ENCODE measurements at regions of chr1 and their contacts with region 1.

Region 1: GRCh38 chr1:155063550-155064110 is at the start of gene EFNA4:
- DNase-seq: peak; percentile 93
- H3K4me3 ChIP-seq: peak within 1 kb of the TSS; percentile 84
- H3K27ac ChIP-seq: peak within 1 kb of the TSS; percentile 55
- H3K4me1 ChIP-seq: peaks cover 32% of the 10 kb centered on the region
- CTCF ChIP-seq: no peak
- total RNA-seq, gene EFNA4: 10.5 and 11.5 TPM in 2 replicates

Region 2: DNA sequence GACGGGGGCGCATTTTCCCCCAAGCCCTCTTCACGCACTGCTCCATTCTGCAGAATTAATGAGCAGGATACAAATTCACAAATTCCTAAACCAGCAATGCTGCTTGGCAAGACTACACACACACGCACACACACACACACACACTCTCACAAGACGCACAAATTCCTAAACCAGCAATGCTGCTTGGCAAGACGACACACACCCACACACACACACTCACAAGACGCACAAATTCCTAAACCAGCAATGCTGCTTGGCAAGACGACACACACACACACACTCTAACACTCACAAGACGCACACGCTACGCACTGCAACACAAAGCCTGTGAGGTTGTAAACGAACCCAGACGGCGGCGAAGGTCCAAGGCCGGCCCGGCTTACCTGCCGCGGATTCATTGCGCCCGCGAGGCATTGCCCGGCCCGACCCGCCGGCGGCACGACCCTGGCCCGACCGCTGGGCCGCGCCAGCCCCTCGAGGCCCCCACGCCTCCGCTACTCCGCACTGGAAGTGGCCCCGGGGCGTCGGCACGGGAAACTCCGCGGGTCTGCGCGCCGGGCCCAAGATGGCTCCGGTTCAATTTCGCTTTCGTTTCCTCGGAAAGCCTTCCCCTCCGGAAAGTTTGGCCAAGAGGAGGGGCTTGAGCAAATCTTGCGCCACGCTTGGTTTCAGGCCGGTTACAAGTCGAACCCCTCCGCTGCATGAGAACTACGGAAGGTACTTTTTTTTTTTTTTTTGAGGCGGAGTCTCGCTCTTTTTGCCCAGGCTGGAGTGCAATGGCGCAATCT is 455.8 kb before region 1 on chr1 and contains the start of gene ADAR:
- CTCF ChIA-PET with region 1: no interaction called
- POLR2A ChIA-PET with region 1: no interaction called
- intact Hi-C with region 1: loop called (anchors 5 kb)
- DNase-seq: peak; percentile 96
- H3K4me3 ChIP-seq: peak within 1 kb of the TSS; percentile 81
- H3K27ac ChIP-seq: peak within 1 kb of the TSS; percentile 81
- H3K4me1 ChIP-seq: peaks cover 43% of the 10 kb centered on the region
- CTCF ChIP-seq: peak; percentile 42; the same call in 1 of the 2 replicates
- total RNA-seq, gene ADAR: 87.8 and 90.2 TPM in 2 replicates

Region 3: GRCh38 chr1:154863315-154864174 is 200.1 kb before region 1 on chr1:
- CTCF ChIA-PET with region 1: no interaction called
- POLR2A ChIA-PET with region 1: no interaction called
- intact Hi-C with region 1: loop called (anchors 5 kb)
- DNase-seq: peak; percentile 83
- H3K4me3 ChIP-seq: peak overlapping the region; percentile 59
- H3K27ac ChIP-seq: peak overlapping the region; percentile 91
- H3K4me1 ChIP-seq: peaks cover 98% of the 10 kb centered on the region
- CTCF ChIP-seq: peak; percentile 93

Region 4: DNA sequence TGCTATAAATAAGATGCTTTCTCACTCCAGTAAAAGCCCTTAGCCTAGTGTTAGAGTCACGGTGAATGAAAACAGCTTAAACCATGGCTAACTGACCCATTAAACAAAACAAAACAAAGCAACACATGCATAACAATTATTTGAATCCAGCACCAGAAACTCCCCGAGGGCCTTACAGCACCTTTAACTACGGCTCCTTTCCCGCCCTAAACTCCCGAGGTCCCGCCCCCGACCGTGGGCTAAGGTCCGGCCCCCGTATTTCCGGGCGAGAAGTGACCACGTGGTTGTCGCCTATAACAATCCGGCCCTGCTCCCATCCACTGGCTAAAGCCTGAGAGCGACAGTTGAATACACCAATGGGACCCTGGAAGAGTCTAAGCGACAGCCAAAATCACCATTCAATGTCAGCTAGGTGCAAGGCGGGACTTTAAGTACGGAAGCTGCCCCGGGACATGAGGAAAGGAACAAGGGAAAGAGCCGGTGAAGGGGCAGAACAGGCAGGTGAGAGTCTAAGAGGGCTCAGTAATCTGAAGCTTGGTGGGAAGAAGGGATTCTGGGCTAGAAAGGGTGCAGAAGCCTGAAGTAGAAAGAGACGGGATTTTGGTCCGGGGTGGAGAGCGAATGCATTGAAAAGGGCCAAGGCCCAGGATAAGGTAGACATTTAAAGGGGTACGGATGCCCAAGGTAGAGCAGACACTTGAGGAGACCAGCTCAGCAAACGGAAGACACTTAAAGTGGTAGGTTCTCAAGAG is 80.6 kb before region 1 on chr1 and contains the start of gene FLAD1:
- CTCF ChIA-PET with region 1: interaction called, 4 read pairs
- POLR2A ChIA-PET with region 1: interaction called, 3 read pairs
- intact Hi-C with region 1: loop called (anchors 5 kb)
- DNase-seq: peak; percentile 100
- H3K4me3 ChIP-seq: peak within 1 kb of the TSS; percentile 77
- H3K27ac ChIP-seq: peak within 1 kb of the TSS; percentile 80
- H3K4me1 ChIP-seq: peaks cover 21% of the 10 kb centered on the region
- CTCF ChIP-seq: no peak
- total RNA-seq, gene FLAD1: 52.7 and 55.7 TPM in 2 replicates

Region 5: DNA sequence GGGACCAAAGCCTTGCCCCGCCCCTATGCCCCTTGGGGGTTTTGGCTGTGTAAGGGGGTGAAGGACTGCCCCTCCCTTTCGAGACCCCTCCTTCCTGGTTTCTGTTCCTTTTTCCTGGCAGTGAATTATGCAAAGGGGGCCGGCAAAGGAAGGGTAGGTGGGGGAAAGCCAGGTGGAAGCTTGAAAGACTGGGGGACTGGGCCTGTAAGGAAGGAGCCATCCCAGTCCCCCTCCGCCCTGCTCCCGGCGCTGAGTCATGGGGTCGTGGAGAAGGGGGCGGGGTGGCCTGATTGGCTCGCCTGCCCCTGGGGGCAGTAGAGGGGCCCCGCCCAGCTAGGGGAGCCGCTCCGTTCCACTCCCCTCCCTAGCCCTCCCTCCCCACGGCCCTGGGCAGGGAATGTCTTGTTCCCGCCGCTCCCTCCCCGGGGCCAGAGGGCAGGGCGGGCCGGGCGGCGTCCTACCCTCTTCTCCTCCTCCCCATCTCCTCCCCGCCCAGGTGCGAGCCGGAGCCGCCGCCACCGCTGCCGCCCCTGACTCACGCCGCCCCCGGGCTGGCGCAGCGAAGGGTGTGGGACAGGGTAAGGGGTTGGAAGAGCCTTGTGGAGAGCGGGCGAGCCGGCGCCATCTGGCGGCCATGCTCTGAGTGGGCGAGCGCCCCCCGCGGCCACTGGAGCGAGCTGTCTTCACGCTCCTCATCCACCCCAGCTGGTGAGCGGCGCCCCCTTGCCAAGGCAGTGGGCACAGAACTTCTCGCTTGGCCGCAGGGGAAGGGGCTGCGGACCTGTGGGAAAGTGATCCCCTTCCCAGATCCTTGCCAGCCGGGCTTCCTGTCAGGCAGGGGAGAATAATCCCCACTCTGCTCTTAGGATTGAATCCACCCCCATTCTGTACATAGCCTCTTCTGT is 46.3 kb before region 1 on chr1:
- CTCF ChIA-PET with region 1: no interaction called
- POLR2A ChIA-PET with region 1: interaction called, 4 read pairs
- intact Hi-C with region 1: loop called (anchors 2 kb)
- DNase-seq: peak; percentile 89
- H3K4me3 ChIP-seq: peak overlapping the region; percentile 64
- H3K27ac ChIP-seq: peak overlapping the region; percentile 79
- H3K4me1 ChIP-seq: peaks cover 66% of the 10 kb centered on the region
- CTCF ChIP-seq: peak; percentile 100

Region 6: DNA sequence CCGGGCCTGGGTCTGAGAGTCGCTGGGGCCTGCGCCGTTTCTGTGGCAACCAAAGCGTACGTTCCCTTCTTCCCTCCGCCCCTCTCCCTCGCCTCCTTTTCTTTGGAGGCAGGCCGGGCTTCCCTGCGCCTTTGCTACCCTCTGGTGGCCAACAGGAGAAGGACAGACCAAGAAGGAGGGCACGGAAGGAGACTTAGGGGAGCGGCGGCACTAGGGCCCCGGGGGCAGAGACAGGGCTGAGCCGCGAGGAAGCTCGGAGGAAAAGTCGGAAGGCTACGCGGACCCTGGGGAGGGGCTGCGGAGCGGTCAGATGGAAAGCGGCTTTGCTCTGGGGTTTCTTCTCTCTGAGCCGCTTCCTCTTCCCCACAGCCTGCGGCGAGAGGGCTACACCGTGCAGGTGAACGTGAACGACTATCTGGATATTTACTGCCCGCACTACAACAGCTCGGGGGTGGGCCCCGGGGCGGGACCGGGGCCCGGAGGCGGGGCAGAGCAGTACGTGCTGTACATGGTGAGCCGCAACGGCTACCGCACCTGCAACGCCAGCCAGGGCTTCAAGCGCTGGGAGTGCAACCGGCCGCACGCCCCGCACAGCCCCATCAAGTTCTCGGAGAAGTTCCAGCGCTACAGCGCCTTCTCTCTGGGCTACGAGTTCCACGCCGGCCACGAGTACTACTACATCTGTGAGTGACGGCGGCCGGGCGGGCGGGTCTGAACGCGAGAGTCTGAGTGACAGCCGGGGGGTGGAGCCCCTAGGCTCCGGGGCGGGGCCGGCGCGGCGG is 21.3 kb after region 1 on chr1:
- CTCF ChIA-PET with region 1: interaction called, 8 read pairs
- POLR2A ChIA-PET with region 1: interaction called, 5 read pairs
- intact Hi-C with region 1: loop called (anchors 1 kb)
- DNase-seq: peak; percentile 94
- H3K4me3 ChIP-seq: peak overlapping the region; percentile 81
- H3K27ac ChIP-seq: peak overlapping the region; percentile 87
- H3K4me1 ChIP-seq: peaks cover 45% of the 10 kb centered on the region
- CTCF ChIP-seq: peak; percentile 87

Measured in OCI-LY7 (cell line).